HCT116 (cell line): ENCODE measurements at regions of chr7 and their contacts with region 1.

Region 1: GRCh38 chr7:92447345-92448204 is at the start of gene GATAD1:
- DNase-seq: peak; percentile 88
- ATAC-seq: peak; percentile 89
- H3K4me3 ChIP-seq: peak within 1 kb of the TSS; percentile 72 to 87
- H3K27ac ChIP-seq: peak within 1 kb of the TSS; percentile 87
- H3K4me1 ChIP-seq: peaks cover 4 to 10% of the 10 kb centered on the region in 2 experiments; a peak in 3 of 4 replicates
- H3K27me3 ChIP-seq: no peaks in the 10 kb centered on the region
- CTCF ChIP-seq: peak in 1 of 3 experiments; percentile 89; a peak in 1 of 6 replicates
- POLR2A ChIP-seq: peak; percentile 43
- RAD21 ChIP-seq: no peak
- total RNA-seq, gene GATAD1: 23.9 TPM

Region 2: GRCh38 chr7:91089382-91089963 is 1358.1 kb before region 1 on chr7:
- CTCF ChIA-PET with region 1: no interaction called
- POLR2A ChIA-PET with region 1: no interaction called
- RAD21 ChIA-PET with region 1: no interaction called
- intact Hi-C with region 1: loop called (anchors 10 kb)
- DNase-seq: peak; percentile 26
- ATAC-seq: peak; percentile 82
- H3K4me3 ChIP-seq: no peak overlapping the region
- H3K27ac ChIP-seq: no peak overlapping the region
- H3K4me1 ChIP-seq: no peaks in the 10 kb centered on the region
- H3K27me3 ChIP-seq: no peaks in the 10 kb centered on the region
- CTCF ChIP-seq: peak; percentile 47 to 84 (median 82); a peak in 5 of 6 replicates
- POLR2A ChIP-seq: no peak
- RAD21 ChIP-seq: peak; percentile 69

Region 3: GRCh38 chr7:91880413-91881241 is 566.9 kb before region 1 on chr7 and contains the start of gene MTERF1:
- CTCF ChIA-PET with region 1: interaction called, 20 read pairs
- POLR2A ChIA-PET with region 1: interaction called, 3 read pairs
- RAD21 ChIA-PET with region 1: interaction called in 1 of 2 experiments, 4 read pairs
- intact Hi-C with region 1: loop called (anchors 1 kb)
- DNase-seq: peak; percentile 85
- ATAC-seq: peak; percentile 94
- H3K4me3 ChIP-seq: peak within 1 kb of the TSS; percentile 68 to 92
- H3K27ac ChIP-seq: peak within 1 kb of the TSS; percentile 15
- H3K4me1 ChIP-seq: peaks cover 4 to 16% of the 10 kb centered on the region in 2 experiments; a peak in 3 of 4 replicates
- H3K27me3 ChIP-seq: no peaks in the 10 kb centered on the region
- CTCF ChIP-seq: peak; percentile 97 to 100 (median 98)
- POLR2A ChIP-seq: peak; percentile 79
- RAD21 ChIP-seq: peak; percentile 99
- total RNA-seq, gene MTERF1: 13.1 TPM

Region 4: DNA sequence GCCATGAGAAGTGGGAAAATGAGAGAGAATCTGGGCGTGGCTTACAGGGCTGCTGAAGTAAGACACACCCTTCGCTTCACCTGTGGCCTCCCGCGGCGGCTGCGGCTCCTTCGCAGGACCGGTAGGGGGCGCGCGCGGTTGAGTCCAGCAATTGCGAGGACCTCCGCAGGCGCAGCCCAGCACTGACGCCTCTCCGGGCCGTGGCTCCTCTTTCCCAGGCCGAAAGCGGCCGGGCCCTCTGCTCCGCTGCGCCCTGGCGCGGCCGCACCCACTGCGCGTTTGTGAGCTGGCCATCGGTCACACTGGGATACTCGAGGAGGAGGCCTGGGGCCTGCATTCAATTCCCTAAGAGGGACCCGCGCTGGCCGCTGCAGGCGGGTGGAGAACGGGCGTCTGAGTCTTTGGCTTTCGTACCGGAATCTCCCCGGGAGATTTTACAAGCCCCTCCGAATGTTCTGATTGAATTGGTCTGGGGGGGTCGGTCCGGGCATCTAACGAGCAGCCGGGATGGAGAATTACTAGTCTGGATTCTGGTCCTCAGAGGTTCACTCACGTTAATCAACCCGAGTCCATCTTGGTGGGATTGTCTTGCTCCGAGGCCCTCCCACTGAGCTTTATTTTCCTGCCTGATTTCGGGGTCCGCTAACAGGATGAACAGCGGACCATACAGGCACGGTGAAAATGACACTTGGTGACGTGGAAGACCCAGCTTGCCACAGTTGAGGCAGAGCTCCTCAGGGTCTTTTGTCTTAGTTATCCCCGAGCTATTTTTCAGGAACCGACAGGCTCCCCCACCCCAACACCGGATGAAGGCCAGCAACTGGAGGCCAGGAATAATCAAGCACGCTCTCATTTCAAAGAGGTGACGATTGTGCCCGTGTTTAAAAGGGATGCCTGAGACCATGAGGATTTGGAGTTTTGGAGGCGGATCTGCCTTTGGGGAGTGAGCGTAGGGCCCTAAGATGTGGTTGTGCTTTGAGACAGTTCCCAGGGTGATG is 268.3 kb before region 1 on chr7 and contains the start of gene LRRD1:
- CTCF ChIA-PET with region 1: interaction called, 7 read pairs
- POLR2A ChIA-PET with region 1: no interaction called
- RAD21 ChIA-PET with region 1: no interaction called
- intact Hi-C with region 1: loop called (anchors 5 kb)
- DNase-seq: peak; percentile 71
- ATAC-seq: peak; percentile 100
- H3K4me3 ChIP-seq: peak within 1 kb of the TSS in 1 of 2 experiments; percentile 41; a peak in 2 of 4 replicates
- H3K27ac ChIP-seq: no peak within 1 kb of the TSS
- H3K4me1 ChIP-seq: peaks cover 0 to 13% of the 10 kb centered on the region in 2 experiments; a peak in 3 of 4 replicates
- H3K27me3 ChIP-seq: no peaks in the 10 kb centered on the region
- CTCF ChIP-seq: peak; percentile 86 to 97 (median 94)
- POLR2A ChIP-seq: no peak
- RAD21 ChIP-seq: peak; percentile 80
- total RNA-seq, gene LRRD1: not detected

Region 5: GRCh38 chr7:92221756-92222155 is 225.8 kb before region 1 on chr7:
- CTCF ChIA-PET with region 1: no interaction called
- POLR2A ChIA-PET with region 1: no interaction called
- RAD21 ChIA-PET with region 1: no interaction called
- intact Hi-C with region 1: no loop called
- DNase-seq: no peak
- ATAC-seq: no peak
- H3K4me3 ChIP-seq: no peak overlapping the region
- H3K27ac ChIP-seq: no peak overlapping the region
- H3K4me1 ChIP-seq: no peaks in the 10 kb centered on the region
- H3K27me3 ChIP-seq: no peaks in the 10 kb centered on the region
- CTCF ChIP-seq: no peak
- POLR2A ChIP-seq: no peak
- RAD21 ChIP-seq: no peak

Region 6: DNA sequence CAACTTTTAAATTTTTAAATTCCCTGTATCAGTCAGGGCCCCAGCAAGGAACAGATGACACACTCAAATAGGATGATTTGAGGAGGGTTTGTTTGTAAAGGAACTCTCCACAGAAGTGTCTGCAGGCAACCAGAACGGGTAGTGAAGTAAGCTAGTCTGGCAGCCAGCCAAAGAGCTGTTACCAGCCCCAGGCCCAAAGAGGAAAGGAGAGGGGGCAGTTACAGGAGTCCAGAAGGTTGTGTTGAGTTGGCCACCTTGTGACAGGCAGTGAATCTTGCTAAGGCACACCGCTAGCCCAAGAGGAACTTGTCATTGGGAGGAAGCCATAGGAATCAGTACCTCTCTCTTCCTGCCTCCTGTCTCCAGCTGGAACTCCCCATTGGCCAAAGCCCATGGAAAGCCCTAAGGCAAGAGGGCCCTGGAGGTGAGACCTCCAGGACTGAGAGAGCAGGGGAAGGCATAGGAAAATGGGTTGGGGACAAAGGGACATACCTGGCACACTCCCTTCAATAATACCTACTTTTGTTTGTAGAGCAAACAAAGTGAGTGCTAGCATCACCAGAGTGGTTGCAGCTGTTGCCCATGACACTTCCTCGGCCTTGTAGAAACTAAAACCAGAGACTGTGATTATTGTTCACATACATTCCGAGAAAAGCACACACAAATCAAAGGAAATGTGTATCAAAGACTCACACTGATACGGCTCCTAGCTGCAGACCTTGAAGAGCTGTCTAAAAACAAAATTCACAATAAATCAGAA is 25.7 kb before region 1 on chr7:
- CTCF ChIA-PET with region 1: interaction called, 24 read pairs
- POLR2A ChIA-PET with region 1: no interaction called
- RAD21 ChIA-PET with region 1: no interaction called
- intact Hi-C with region 1: loop called (anchors 1 kb)
- DNase-seq: no peak
- ATAC-seq: no peak
- H3K4me3 ChIP-seq: no peak overlapping the region
- H3K27ac ChIP-seq: no peak overlapping the region
- H3K4me1 ChIP-seq: peaks cover 0 to 12% of the 10 kb centered on the region in 2 experiments; a peak in 2 of 4 replicates
- H3K27me3 ChIP-seq: no peaks in the 10 kb centered on the region
- CTCF ChIP-seq: no peak
- POLR2A ChIP-seq: no peak
- RAD21 ChIP-seq: no peak

Region 7: GRCh38 chr7:92504563-92504962 is 57.0 kb after region 1 on chr7:
- CTCF ChIA-PET with region 1: no interaction called
- POLR2A ChIA-PET with region 1: no interaction called
- RAD21 ChIA-PET with region 1: no interaction called
- intact Hi-C with region 1: no loop called
- DNase-seq: no peak
- ATAC-seq: no peak
- H3K4me3 ChIP-seq: no peak overlapping the region
- H3K27ac ChIP-seq: no peak overlapping the region
- H3K4me1 ChIP-seq: no peaks in the 10 kb centered on the region
- H3K27me3 ChIP-seq: no peaks in the 10 kb centered on the region
- CTCF ChIP-seq: no peak
- POLR2A ChIP-seq: no peak
- RAD21 ChIP-seq: no peak

Region 8: GRCh38 chr7:92778972-92779371 is 331.4 kb after region 1 on chr7:
- CTCF ChIA-PET with region 1: no interaction called
- POLR2A ChIA-PET with region 1: no interaction called
- RAD21 ChIA-PET with region 1: no interaction called
- intact Hi-C with region 1: no loop called
- DNase-seq: no peak
- ATAC-seq: no peak
- H3K4me3 ChIP-seq: no peak overlapping the region
- H3K27ac ChIP-seq: no peak overlapping the region
- H3K4me1 ChIP-seq: peaks cover 17 to 28% of the 10 kb centered on the region in 2 experiments
- H3K27me3 ChIP-seq: no peaks in the 10 kb centered on the region
- CTCF ChIP-seq: no peak
- POLR2A ChIP-seq: no peak
- RAD21 ChIP-seq: no peak